CD4-positive, alpha-beta memory T cell (primary cell): ENCODE measurements at regions of chrX and their contacts with region 1.

Region 1: DNA sequence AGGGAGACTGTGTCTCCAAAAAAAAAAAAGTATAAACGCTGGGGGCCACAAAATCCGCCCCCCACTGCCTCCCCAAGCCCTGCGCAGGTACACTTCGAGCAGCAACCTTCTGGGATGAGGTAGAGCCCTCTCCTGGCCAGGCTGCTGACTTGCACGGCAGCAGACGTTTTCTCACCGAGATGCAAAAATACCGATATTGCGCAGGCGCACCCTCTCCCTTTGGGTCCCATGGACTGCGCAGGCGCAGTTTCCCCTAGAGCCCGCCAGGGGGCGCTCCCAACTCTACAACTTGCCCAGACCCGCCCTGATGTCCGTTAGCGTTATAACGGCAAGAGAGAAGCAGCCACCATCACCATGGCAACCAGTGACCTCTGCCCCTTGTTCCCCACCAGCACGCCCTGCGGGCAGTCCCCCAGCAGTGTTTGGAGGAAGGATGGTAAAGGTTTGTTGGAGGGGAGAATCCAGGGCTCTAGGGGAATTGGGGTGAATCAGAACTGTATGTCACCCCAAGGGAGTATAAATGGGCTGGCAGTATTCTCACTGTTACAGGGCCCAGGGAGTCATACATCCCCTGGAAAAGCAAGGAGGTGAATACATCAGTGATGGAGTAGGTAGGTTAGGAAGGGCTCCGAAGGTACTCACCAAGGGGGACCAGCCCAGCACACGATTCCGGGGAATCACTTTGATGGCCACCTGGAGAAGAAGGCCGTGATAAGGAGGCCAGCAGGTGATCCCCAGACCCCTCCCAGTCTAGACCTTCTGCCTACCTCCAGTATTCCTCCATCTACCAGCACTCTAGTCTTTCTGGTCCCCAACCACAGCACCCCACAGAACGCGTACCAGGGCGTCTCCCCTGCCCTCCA is 1.5 kb downstream of the PIM2 start:
- DNase-seq: peak; percentile 90 to 93 (median 92)
- H3K4me3 ChIP-seq: peak overlapping the region; percentile 91 to 98
- H3K4me3 Mint-ChIP-seq: peak overlapping the region; percentile 93 to 98 (median 96)
- H3K27ac ChIP-seq: peak overlapping the region; percentile 88
- H3K27ac Mint-ChIP-seq: peak overlapping the region; percentile 87 to 97 (median 95)
- H3K4me1 ChIP-seq: peaks cover 67% of the 10 kb centered on the region
- H3K4me1 Mint-ChIP-seq: peaks cover 27 to 85% (median 56%) of the 10 kb centered on the region in 4 donors
- H3K27me3 ChIP-seq: no peaks in the 10 kb centered on the region
- H3K27me3 Mint-ChIP-seq: no peaks in the 10 kb centered on the region

Region 2: DNA sequence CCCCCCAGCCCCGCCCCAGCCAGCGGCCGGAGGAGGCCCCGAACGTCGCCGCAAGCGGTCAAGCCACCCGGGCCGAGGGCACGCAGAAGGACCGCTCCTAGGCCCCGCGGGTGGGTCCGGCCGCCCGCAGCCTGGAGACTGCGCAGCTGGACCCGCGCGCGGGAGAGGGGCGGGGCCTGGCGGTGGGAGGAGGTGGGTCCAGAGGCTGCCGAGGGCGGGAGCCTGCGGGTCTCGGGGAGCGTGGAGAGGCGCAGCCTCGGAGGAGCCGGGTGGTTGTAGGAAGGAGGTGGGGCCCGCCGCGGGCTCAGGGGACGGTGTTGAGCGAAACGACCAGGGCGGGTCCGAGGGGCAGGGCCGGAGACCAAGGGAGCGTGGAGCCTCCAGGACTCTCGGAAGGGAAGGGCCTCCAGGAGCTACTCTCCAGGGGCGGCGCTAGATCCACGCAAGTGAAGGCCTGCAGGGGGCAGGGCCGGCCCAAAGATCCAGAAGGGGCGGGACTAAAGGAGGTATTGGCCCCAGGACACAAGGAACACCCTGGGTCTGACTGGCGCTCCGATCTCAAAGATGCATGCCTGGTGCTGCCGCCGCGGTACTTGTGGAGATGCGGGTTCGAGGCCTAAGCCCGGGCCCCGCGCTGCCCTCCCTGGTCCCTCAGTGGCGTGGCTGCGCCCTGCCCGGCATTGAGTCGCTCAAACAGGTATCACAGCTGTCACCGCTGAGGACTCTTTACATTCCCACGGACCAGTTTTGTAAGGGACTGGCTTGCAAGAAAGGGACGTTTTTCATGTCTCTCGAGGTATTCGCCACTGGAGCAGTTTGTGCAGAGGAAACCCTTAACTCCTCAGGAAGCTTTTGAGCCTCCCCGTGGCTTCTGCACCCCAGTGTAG is 25.7 kb before region 1 on chrX:
- CTCF ChIA-PET with region 1: interaction called, 12 read pairs
- POLR2A ChIA-PET with region 1: interaction called, 47 read pairs
- intact Hi-C with region 1: loop called (anchors 1 kb)
- DNase-seq: peak; percentile 76 to 85 (median 78)
- H3K4me3 ChIP-seq: peak overlapping the region in 1 of 2 donors; percentile 49
- H3K4me3 Mint-ChIP-seq: peak overlapping the region; percentile 75 to 97 (median 82)
- H3K27ac ChIP-seq: peak overlapping the region; percentile 52
- H3K27ac Mint-ChIP-seq: peak overlapping the region in 6 of 7 donors; percentile 37 to 90 (median 74)
- H3K4me1 ChIP-seq: peaks cover 15% of the 10 kb centered on the region
- H3K4me1 Mint-ChIP-seq: peaks cover 10 to 30% (median 21%) of the 10 kb centered on the region in 4 donors
- H3K27me3 ChIP-seq: no peaks in the 10 kb centered on the region
- H3K27me3 Mint-ChIP-seq: peaks cover 0 to 1% of the 10 kb centered on the region in 2 donors

Region 3: DNA sequence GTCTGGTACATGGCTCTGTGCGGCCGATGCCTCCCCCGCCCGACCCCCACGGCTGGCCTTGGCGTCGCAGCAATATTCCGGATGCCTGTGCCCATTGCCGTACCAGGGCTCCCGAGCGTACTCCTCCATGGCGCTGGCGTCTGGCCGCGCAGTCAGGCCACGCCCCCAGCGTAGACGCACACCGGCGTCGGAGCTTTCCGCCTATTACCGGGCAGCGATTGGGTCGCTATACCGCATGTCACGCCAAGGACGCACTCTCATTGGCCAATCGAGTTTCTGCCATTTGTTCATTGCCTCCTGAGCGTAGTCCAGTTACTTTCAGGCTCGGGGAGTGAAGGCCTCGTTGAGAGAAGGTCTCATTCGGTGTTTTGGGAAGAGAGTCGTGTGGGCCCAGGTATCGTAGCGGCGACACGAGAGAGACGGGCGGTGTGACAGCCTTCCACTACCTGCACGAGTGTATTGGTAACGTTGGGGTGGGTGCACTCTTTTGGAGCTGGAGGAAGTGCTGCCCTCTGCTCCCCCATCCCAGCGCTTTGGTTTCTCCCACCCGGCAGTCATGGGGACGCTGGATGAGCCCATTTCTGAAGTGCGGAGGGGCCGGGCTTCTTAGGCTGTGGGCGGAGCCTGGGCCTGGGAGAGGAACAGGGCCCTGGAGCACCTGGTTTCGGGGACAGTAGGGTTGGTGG is 19.6 kb before region 1 on chrX and contains the starts of genes PQBP1 and TIMM17B:
- CTCF ChIA-PET with region 1: interaction called, 12 read pairs
- POLR2A ChIA-PET with region 1: interaction called, 47 read pairs
- intact Hi-C with region 1: loop called (anchors 1 kb)
- DNase-seq: peak; percentile 88 to 93 (median 92)
- H3K4me3 ChIP-seq: peak within 1 kb of the TSS; percentile 78 to 92
- H3K4me3 Mint-ChIP-seq: peak within 1 kb of the TSS; percentile 86 to 96 (median 92)
- H3K27ac ChIP-seq: peak within 1 kb of the TSS; percentile 93
- H3K27ac Mint-ChIP-seq: peak within 1 kb of the TSS; percentile 88 to 99 (median 96)
- H3K4me1 ChIP-seq: peaks cover 24% of the 10 kb centered on the region
- H3K4me1 Mint-ChIP-seq: peaks cover 4 to 34% (median 17%) of the 10 kb centered on the region in 4 donors
- H3K27me3 ChIP-seq: no peaks in the 10 kb centered on the region
- H3K27me3 Mint-ChIP-seq: no peaks in the 10 kb centered on the region
- total RNA-seq, gene PQBP1: 59.6 to 64.4 TPM
- total RNA-seq, gene TIMM17B: 42.6 to 46.2 TPM

Region 4: DNA sequence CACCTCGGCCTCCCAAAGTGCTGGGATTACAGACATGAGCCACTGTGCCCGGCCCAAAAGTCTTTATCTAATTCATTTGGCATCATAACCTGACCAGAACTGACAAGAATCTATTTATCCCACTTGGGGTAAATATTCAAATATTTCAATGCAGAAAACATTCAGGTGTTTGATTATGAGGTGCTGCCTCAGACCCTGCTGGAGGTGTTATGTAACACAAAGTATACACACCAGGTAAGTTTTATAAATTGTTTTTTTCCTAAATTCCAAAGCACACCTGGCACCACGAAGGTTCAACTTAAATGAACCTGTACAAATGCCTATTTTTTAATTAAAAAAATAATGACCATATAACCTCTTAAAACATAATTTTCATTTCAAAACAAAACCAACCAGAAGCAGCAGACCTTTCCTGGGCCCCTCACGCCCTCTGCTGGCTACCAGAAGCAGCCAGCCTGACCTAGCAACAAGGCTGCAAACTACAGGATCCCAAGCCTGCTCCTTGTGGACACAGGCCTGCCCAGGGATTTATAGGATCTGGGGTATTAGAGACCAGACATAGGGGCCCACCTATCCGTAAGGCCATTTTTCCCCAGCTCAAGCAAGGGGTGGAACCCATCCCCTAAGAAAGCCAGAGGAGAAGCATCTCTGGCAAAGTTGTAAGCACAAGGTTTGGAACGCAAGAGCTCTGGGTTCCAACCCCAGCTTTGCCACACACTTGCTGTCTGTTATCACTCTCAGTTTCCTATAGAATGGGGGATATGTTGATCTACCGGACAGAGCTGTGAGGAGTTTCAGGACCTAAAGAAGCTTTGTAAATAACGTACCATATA is 28.4 kb after region 1 on chrX:
- CTCF ChIA-PET with region 1: interaction called, 4 read pairs
- POLR2A ChIA-PET with region 1: interaction called, 235 read pairs
- intact Hi-C with region 1: loop called (anchors 1 kb)
- DNase-seq: peak; percentile 45 to 66 (median 62)
- H3K4me3 ChIP-seq: no peak overlapping the region
- H3K4me3 Mint-ChIP-seq: peak overlapping the region in 6 of 8 donors; percentile 11 to 64 (median 26)
- H3K27ac ChIP-seq: no peak overlapping the region
- H3K27ac Mint-ChIP-seq: peak overlapping the region; percentile 66 to 92 (median 79)
- H3K4me1 ChIP-seq: peaks cover 70% of the 10 kb centered on the region
- H3K4me1 Mint-ChIP-seq: peaks cover 34 to 63% (median 48%) of the 10 kb centered on the region in 4 donors
- H3K27me3 ChIP-seq: no peaks in the 10 kb centered on the region
- H3K27me3 Mint-ChIP-seq: no peaks in the 10 kb centered on the region

Region 5: DNA sequence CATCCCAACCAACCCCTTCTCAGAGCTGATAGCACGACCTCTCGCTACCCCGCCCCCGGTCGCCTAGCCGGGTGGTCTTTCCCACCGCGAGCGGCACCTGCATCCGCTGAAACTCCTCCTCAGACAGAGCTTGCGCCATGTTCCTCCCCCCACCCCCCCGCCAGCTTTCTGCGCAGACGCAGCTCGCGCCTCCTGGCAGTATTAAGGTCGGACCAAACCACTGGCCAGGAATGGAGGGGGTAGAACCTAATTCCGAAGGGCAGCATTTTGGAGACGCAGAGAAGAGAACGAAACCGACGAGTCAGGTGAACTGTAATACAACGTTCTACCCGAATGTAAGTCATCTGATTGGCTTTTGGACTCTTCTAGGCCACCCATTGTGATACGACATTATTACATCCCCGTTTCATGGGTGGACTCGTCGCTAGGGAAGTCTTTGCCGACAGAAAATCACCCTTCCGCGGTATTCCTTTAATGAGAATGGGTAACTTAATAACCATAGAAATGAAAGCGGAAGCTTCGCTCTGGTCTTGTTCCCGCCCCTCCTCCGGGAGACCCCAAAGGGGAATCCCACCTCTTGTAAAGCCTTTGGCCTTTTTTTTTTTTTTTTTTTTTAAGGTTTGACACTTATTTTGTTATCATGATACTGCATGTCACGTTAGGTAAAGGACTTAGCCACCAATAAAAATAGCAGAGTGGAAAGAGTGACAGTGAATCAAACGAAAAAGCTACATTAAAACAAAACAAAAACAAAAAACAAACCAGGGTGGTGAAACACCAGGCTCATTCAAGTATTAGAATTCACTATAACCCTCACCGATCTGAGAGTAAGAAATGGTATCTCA is 84.9 kb after region 1 on chrX and contains the start of gene GRIPAP1:
- CTCF ChIA-PET with region 1: no interaction called
- POLR2A ChIA-PET with region 1: interaction called, 6 read pairs
- intact Hi-C with region 1: loop called (anchors 5 kb)
- DNase-seq: peak; percentile 82 to 94 (median 86)
- H3K4me3 ChIP-seq: peak within 1 kb of the TSS; percentile 79 to 86
- H3K4me3 Mint-ChIP-seq: peak within 1 kb of the TSS; percentile 91 to 99 (median 97)
- H3K27ac ChIP-seq: peak within 1 kb of the TSS; percentile 97
- H3K27ac Mint-ChIP-seq: peak within 1 kb of the TSS; percentile 93 to 99 (median 98)
- H3K4me1 ChIP-seq: peaks cover 27% of the 10 kb centered on the region
- H3K4me1 Mint-ChIP-seq: peaks cover 17 to 36% (median 27%) of the 10 kb centered on the region in 4 donors
- H3K27me3 ChIP-seq: no peaks in the 10 kb centered on the region
- H3K27me3 Mint-ChIP-seq: no peaks in the 10 kb centered on the region
- total RNA-seq, gene GRIPAP1: 99.6 to 111 TPM